Activated naive CD8-positive, alpha-beta T cell treated with anti-CD3 and anti-CD28 coated beads, Interleukin-2, amount 10 ng/mL, durations not matched to agents 7 days and 5 days (primary cell): ENCODE measurements at regions of chr1 and their contacts with region 1.

Region 1: DNA sequence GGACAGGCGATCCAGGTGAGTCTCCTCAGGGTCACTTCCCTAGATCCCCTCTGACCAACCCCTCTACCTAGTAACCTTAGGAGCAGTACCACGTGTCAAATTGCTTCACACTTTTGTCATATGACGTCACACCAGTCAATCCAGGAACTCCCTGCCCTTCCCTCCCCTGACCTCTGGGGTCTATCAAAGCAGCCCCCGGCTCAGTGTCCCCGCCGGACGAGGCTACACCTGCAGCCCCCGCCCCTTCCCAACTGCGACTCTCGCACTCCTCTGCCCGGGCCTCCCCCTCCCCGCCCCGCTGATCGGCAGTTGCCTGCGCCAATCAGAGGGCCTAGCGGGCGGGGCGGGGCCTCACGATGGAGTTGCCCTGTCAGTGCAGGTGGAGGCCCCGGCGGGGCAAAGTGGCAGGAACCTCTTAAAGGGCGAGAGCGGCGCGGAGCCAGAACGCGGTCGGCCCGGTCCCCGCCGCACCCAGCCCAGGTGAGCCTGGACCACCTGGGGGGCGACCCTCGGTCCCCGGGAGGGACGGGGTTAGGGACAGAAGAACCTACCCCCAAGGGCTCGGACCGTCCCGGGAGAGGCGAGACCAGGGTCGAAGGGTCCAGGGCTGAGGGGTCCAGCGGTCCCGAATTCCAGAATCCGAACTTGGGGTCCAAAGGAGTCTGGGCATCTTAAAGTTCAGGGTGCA is 27.5 kb upstream of the EPB41 start:
- DNase-seq: peak; percentile 97
- ATAC-seq: peak; percentile 72
- H3K4me3 Mint-ChIP-seq: peak overlapping the region; percentile 87
- H3K27ac Mint-ChIP-seq: peak overlapping the region; percentile 94
- H3K4me1 Mint-ChIP-seq: peaks cover 39% of the 10 kb centered on the region
- H3K27me3 Mint-ChIP-seq: no peaks in the 10 kb centered on the region

Region 2: DNA sequence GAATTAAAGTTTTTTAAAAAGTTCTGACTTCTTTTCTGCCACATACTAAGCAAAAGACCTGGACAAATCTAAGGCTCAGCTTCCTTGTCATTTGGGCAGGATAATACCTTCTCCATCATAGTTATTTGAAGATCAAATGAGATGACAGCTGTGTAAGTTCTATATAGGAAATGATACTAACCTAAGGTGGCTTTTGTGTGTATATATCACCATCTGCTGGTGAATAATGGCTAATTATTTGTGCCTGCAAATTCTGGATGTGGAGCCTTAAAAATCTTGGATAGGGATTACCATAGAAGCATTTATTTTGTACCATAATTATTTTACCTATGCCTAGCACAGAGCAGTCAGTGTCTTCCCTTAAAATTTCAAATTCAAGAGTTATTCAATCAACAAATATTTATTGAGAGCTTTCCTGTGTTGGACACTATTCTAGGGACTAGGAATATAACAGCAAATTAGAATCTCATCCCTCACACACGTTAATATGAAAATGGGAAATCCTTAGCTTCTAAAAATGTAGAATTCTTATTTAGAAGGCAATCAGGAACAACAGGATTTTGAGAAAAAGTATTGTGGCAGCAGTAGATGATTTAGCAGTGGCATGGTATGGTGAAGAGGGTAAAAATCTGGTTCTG is 147.1 kb after region 1 on chr1:
- POLR2A ChIA-PET with region 1: interaction called, 10 read pairs
- DNase-seq: no peak
- ATAC-seq: no peak
- H3K4me3 Mint-ChIP-seq: no peak overlapping the region
- H3K27ac Mint-ChIP-seq: no peak overlapping the region
- H3K4me1 Mint-ChIP-seq: no peaks in the 10 kb centered on the region
- H3K27me3 Mint-ChIP-seq: no peaks in the 10 kb centered on the region